ENCODE measurements at regions of chr12 and their contacts with region 1.

Region 1: GRCh38 chr12:107884769-107885694 is 110.5 kb downstream of the ASCL4 start:
- DNase-seq: peak in 1 of 2 experiments; percentile 31
- H3K4me3 ChIP-seq: no peak overlapping the region
- H3K27ac ChIP-seq: no peak overlapping the region
- H3K4me1 ChIP-seq: no peaks in the 10 kb centered on the region
- H3K27me3 ChIP-seq: peaks cover 59% of the 10 kb centered on the region
- CTCF ChIP-seq: peak; percentile 78

Region 2: DNA sequence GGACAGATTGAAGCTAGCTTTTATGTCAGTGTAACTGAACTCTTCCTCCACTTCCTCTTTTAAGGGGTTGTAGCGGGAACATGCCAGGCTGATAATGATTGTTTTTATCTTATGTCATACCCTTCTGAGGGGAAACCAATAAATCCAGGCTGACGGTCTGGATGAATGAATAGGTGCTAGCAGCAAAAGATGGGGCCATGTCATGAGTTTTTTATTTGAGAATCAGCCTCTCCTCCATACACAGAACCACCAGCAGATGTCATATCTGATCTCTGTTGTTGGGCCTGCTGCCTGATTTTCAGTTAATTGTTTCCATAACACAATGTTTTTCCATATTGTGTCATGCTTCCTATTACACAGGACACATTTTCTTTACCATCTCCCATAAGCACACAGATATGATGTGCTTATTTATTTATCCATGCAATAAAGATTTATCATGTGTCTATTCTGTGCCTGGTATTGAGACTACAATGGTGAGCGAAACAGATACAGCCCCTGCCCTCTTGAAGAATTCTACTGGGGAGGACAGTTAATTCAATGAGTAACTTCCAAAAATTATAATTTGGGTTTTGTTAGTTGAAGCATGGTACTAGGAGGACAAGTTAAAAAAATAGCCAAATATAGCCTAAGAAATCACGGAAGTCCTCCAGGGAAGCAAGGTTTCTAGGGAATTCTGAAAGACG is 758.1 kb before region 1 on chr12:
- CTCF ChIA-PET with region 1: no interaction called
- POLR2A ChIA-PET with region 1: no interaction called
- intact Hi-C with region 1: loop called (anchors 2 kb)
- DNase-seq: peak in 1 of 2 experiments; percentile 11
- H3K4me3 ChIP-seq: no peak overlapping the region
- H3K27ac ChIP-seq: no peak overlapping the region
- H3K4me1 ChIP-seq: no peaks in the 10 kb centered on the region; the same call in 1 of the 2 replicates
- H3K27me3 ChIP-seq: no peaks in the 10 kb centered on the region
- CTCF ChIP-seq: peak; percentile 69

Region 3: DNA sequence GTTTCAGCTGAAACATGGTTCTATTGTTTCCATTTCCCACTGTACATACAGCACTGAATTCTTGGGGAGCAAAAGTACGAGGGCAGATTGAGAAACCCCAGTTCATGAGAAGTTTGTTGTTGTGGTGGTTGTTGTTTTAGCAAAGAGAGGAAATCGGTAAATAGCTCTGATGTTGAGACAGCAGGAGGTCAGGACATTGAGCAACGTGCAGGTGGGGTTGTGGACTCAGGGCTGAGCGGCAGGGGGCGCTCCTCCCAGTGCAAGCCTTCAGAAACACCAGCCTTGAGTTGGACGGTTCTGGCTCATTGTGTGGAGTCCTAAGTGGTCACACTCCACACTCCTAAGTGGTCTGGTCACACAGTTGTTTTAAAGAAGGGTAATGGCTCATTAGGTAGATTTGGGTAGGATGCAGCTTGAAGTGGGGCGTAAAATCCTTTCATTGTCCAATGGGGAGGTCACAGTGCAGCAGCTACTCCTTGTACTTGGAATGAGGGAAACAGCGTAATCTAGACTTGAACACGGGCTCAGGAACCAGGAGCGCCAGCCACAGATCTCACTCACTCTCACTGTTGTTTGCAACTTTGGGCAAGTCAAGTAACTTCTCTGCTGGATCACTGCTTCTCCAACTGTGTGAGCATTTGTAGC is 213.9 kb before region 1 on chr12:
- CTCF ChIA-PET with region 1: interaction called, 3 read pairs
- POLR2A ChIA-PET with region 1: no interaction called
- intact Hi-C with region 1: loop called (anchors 1 kb)
- DNase-seq: no peak
- H3K4me3 ChIP-seq: no peak overlapping the region
- H3K27ac ChIP-seq: no peak overlapping the region
- H3K4me1 ChIP-seq: no peaks in the 10 kb centered on the region; the same call in 1 of the 2 replicates
- H3K27me3 ChIP-seq: peaks cover 11% of the 10 kb centered on the region; the same call in 1 of the 2 replicates
- CTCF ChIP-seq: peak; percentile 69

Region 4: DNA sequence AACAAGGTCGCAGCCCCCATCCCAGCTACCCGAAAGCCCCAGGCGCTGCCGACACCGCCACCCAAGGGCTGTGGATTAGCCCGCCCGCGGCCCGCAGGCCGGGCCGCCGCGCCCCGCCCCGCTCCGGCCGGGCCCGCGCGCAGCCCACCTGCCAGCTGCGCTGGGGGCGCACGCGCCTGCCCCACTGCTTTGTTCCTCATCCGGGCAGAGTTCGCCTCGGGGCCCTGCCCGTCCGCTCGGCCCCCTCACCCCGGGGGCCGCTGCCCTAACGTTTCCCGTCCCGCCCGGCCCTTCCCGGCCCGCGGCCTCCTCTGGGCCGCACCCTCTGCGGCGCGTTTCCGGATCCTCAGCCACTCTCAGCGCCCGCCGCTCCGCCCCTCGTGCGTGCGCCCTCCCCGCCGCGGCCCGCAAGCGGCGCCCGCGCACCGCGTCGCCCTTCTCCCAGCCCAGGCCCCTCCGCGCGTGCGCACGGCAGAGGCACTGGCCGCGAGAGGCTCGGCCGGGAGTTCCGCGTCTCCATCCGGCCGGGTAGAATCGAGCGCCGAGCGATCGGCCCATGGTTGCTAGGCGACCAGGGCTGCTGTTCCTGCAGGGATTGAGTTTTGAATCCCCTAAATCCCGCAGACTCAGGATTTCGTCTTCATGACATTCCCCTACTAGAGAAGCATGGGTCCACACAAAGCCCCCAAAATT is 124.1 kb before region 1 on chr12 and contains the start of gene PRDM4:
- CTCF ChIA-PET with region 1: no interaction called
- POLR2A ChIA-PET with region 1: no interaction called
- intact Hi-C with region 1: loop called (anchors 2 kb)
- DNase-seq: peak; percentile 77 to 93
- H3K4me3 ChIP-seq: peak within 1 kb of the TSS; percentile 95
- H3K27ac ChIP-seq: no peak within 1 kb of the TSS
- H3K4me1 ChIP-seq: peaks cover 26% of the 10 kb centered on the region
- H3K27me3 ChIP-seq: no peaks in the 10 kb centered on the region
- CTCF ChIP-seq: no peak
- total RNA-seq, gene PRDM4: 21.6 and 28.7 TPM in 2 replicates